ENCODE measurements at regions of chr17 and their contacts with region 1.

Region 1: GRCh38 chr17:81101614-81102306 is 63.5 kb upstream of the PVALEF start:
- DNase-seq: peak; percentile 13
- ATAC-seq: peak; percentile 99
- H3K4me3 ChIP-seq: no peak overlapping the region
- H3K27ac ChIP-seq: no peak overlapping the region
- H3K4me1 ChIP-seq: no peaks in the 10 kb centered on the region
- H3K27me3 ChIP-seq: no peaks in the 10 kb centered on the region; a peak in 2 of 4 replicates
- CTCF ChIP-seq: peak; percentile 100; a peak in 5 of 6 replicates
- EP300 ChIP-seq: no peak
- POLR2A ChIP-seq: no peak
- RAD21 ChIP-seq: peak; percentile 83

Region 2: DNA sequence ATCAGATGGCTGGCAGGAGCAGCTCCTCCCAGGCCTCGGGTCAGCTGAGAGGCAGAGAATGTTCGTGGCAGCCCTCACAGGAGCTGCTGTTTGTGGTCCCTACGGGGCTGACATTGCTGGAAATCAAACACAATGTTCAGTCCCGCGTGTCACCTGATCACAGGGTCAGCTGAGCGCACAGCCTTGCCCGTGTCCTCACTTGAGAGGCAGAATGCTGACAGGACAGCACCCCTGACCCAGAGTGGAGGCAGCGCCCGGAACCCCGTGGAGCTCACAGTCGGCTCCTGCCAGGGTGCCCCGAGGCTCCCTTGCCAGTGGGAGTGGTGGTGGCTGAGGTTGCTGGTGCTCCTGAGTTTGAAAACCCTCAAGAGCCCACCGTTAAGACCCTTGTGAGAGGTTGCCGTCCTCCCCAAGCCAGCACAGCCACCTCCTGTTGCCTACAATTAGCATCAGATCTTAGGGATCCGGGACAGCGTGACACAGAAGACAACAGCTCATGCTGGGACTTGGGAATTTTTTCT is 113.8 kb before region 1 on chr17:
- CTCF ChIA-PET with region 1: interaction called, 10 read pairs
- POLR2A ChIA-PET with region 1: no interaction called
- RAD21 ChIA-PET with region 1: no interaction called
- SMC1A ChIA-PET with region 1: interaction called, 3 read pairs
- in situ Hi-C with region 1: no loop called
- intact Hi-C with region 1: loop called (anchors 1 kb)
- DNase-seq: no peak
- ATAC-seq: no peak
- H3K4me3 ChIP-seq: no peak overlapping the region
- H3K27ac ChIP-seq: no peak overlapping the region
- H3K4me1 ChIP-seq: peaks cover 13% of the 10 kb centered on the region
- H3K27me3 ChIP-seq: no peaks in the 10 kb centered on the region; a peak in 1 of 4 replicates
- CTCF ChIP-seq: no peak
- EP300 ChIP-seq: no peak
- POLR2A ChIP-seq: no peak
- RAD21 ChIP-seq: no peak

Region 3: DNA sequence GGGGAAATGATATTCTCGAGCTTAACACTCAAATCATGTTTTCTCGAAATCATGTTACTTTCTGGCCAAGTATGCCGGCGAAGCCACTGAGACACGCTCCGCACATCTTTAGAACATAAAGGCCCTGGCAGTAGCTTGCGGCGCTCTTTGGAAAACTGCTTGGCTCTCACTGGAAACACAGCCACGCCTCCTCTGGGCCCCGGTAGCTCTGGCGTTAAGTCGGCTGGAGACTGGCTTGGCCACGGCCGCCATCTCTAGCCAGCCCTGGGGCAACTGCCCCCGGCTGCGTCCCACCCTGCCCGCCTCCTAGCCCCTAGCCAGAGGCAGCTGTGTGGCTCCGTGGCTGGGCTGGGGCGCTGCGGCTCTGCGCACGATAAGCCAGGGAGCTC is 76.0 kb before region 1 on chr17:
- CTCF ChIA-PET with region 1: interaction called, 60 read pairs
- POLR2A ChIA-PET with region 1: interaction called, 3 read pairs
- RAD21 ChIA-PET with region 1: interaction called, 19 read pairs
- SMC1A ChIA-PET with region 1: interaction called, 6 read pairs
- in situ Hi-C with region 1: loop called (anchors 10 kb)
- intact Hi-C with region 1: loop called (anchors 1 kb)
- DNase-seq: no peak
- ATAC-seq: no peak
- H3K4me3 ChIP-seq: no peak overlapping the region
- H3K27ac ChIP-seq: no peak overlapping the region
- H3K4me1 ChIP-seq: no peaks in the 10 kb centered on the region
- H3K27me3 ChIP-seq: no peaks in the 10 kb centered on the region; a peak in 2 of 4 replicates
- CTCF ChIP-seq: no peak
- EP300 ChIP-seq: no peak
- POLR2A ChIP-seq: no peak
- RAD21 ChIP-seq: no peak

Region 4: GRCh38 chr17:81119223-81120148 is 17.7 kb after region 1 on chr17:
- CTCF ChIA-PET with region 1: no interaction called
- POLR2A ChIA-PET with region 1: no interaction called
- RAD21 ChIA-PET with region 1: no interaction called
- SMC1A ChIA-PET with region 1: no interaction called
- in situ Hi-C with region 1: no loop called
- intact Hi-C with region 1: no loop called
- DNase-seq: peak; percentile 32
- ATAC-seq: peak; percentile 72
- H3K4me3 ChIP-seq: no peak overlapping the region
- H3K27ac ChIP-seq: no peak overlapping the region
- H3K4me1 ChIP-seq: no peaks in the 10 kb centered on the region
- H3K27me3 ChIP-seq: no peaks in the 10 kb centered on the region; a peak in 1 of 4 replicates
- CTCF ChIP-seq: no peak
- EP300 ChIP-seq: no peak
- POLR2A ChIP-seq: no peak
- RAD21 ChIP-seq: no peak

Measured in GM12878 (cell line).